Activated CD4-positive, alpha-beta T cell treated with anti-CD3 and anti-CD28 coated beads for 36 hours (primary cell): ENCODE measurements at regions of chr1 and their contacts with region 1.

Region 1: GRCh38 chr1:179025125-179025974 is at the start of gene FAM20B:
- DNase-seq: peak; percentile 93
- ATAC-seq: peak; percentile 85
- H3K4me3 Mint-ChIP-seq: peak within 1 kb of the TSS; percentile 87
- H3K27ac Mint-ChIP-seq: peak within 1 kb of the TSS; percentile 87
- H3K4me1 Mint-ChIP-seq: peaks cover 39% of the 10 kb centered on the region
- H3K27me3 Mint-ChIP-seq: no peaks in the 10 kb centered on the region
- total RNA-seq, gene FAM20B: 21.7 to 35.8 TPM

Region 2: DNA sequence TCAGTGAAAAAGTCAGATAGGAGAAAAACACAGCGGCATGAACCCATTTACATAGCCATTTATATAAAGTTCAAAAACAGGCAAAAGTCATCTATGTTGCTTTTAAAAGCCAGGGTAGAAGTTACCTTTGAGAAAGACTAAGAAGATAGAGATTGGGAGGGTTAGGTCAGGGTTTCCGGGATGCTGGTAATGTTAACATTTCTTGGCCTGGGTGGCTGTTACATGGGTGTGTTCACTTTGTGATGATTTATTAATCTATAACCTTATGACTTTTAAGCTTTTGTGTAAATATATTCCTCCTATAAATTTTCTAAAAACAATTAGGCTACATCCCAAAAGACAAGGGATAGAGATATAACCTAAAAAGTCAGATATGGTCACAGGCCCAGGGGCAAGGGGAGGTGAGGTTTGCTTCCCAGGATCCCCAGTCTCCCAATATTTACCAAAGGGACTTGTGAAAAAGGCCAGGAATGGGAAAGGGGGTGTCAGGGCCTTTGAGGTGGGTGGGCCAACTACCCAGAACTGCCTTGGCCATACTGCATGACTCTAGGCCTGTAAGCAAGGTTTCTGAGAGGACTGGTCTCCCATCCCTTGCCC is 14.6 kb before region 1 on chr1:
- CTCF ChIA-PET with region 1: no interaction called
- POLR2A ChIA-PET with region 1: no interaction called
- intact Hi-C with region 1: no loop called
- DNase-seq: no peak
- ATAC-seq: no peak
- H3K4me3 Mint-ChIP-seq: no peak overlapping the region
- H3K27ac Mint-ChIP-seq: no peak overlapping the region
- H3K4me1 Mint-ChIP-seq: no peaks in the 10 kb centered on the region
- H3K27me3 Mint-ChIP-seq: no peaks in the 10 kb centered on the region

Region 3: DNA sequence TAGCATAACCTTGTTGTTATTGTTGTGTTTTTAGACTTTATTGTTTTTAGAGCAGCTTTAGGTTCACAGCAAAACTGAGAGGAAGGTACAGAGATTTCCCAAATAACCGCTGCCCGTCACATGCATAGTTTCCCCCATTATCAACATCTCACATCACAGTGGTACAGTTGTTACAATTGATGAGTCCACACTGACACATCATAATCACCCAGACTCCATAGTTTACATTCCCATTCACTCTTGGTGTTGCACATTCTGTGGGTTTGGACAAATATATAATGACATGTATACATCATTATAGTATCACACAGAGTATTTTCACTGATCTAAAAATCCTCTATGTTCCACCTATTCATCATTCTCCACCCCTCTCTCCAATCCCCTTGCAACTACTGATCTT is 30.6 kb after region 1 on chr1:
- CTCF ChIA-PET with region 1: no interaction called
- POLR2A ChIA-PET with region 1: no interaction called
- intact Hi-C with region 1: no loop called
- DNase-seq: no peak
- ATAC-seq: no peak
- H3K4me3 Mint-ChIP-seq: no peak overlapping the region
- H3K27ac Mint-ChIP-seq: no peak overlapping the region
- H3K4me1 Mint-ChIP-seq: no peaks in the 10 kb centered on the region
- H3K27me3 Mint-ChIP-seq: no peaks in the 10 kb centered on the region

Region 4: DNA sequence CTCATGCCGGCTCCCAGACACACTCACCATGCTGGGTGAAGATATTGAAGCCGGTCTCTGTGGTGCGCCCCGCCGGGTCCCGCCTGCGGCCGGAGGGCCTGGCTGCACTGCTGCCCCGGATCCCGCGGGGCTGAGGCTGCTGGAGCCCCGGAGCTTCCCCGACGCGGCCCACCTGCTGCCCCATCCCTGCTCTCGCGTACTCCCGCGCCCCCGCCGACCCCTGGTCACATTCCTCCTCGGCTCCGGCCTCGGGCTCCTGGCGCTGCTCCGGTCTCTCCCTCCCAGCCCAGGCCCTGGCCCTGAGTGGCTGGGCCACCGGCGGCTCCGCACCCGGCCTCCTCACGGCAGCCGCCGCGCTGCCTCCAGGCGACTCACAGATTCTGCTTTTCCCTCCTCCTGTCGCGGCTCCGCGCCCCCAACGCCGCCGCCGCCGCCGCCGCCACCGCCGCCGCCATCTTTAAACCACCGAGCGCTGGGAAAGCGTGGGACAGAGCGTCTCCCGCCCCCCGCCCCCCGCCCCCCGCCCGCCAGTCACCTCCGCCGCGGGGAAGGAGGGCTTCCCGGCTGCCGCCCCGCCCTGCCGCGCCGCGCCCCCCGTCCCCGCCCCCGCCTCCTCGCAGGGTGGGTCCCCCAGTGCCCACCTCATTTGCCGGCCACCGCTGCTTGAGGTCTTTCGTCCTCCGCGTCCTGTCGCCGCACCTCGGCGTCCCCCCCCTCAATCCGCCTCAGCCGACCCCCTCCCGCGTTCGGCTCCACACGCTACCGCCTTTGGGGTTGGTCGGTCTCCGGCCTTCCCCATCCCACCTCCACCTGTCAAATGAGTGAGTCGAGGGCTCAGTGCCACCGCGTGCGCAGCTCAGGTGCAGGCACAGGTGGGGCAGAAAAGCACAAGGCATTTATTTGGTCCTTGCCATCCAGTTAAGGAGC is 204.1 kb after region 1 on chr1 and contains the start of gene ABL2:
- CTCF ChIA-PET with region 1: no interaction called
- POLR2A ChIA-PET with region 1: no interaction called
- intact Hi-C with region 1: loop called in 1 of 2 experiments (anchors 2 kb)
- DNase-seq: peak; percentile 71
- ATAC-seq: peak; percentile 21
- H3K4me3 Mint-ChIP-seq: peak within 1 kb of the TSS; percentile 86
- H3K27ac Mint-ChIP-seq: peak within 1 kb of the TSS; percentile 88
- H3K4me1 Mint-ChIP-seq: peaks cover 36% of the 10 kb centered on the region
- H3K27me3 Mint-ChIP-seq: no peaks in the 10 kb centered on the region
- total RNA-seq, gene ABL2: 6.6 to 8.4 TPM

Region 5: DNA sequence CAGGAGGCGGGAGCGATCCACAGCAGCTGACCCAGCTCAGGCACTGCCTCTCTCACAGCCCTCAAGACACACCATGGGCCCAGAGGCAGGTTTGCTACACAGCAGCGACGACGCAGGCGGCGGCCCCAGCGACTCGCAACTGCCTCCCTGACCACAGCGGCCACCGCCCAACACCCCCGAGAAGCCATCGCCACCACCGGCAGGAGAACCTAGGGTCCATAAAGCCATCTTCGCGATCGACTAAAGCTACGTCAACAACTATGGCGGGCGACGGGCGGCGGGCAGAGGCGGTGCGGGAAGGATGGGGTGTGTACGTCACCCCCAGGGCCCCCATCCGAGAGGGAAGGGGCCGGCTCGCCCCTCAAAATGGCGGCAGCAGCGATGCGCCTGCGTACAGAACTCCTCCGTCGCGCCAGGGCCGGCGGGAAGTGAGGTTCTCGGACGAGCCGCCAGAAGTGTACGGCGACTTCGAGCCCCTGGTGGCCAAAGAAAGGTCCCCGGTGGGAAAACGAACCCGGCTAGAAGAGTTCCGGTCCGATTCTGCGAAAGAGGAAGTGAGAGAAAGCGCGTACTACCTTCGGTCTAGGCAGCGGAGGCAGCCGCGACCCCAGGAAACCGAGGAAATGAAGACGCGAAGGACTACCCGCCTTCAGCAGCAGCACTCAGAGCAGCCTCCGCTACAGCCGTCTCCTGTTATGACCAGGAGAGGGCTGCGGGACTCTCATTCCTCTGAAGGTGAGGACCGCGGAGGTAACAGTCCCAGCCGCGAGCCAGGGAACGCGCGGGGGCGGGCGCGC is 857.1 kb after region 1 on chr1 and contains the start of gene TOR1AIP1:
- CTCF ChIA-PET with region 1: no interaction called
- POLR2A ChIA-PET with region 1: no interaction called
- intact Hi-C with region 1: loop called in 1 of 2 experiments (anchors 2 kb)
- DNase-seq: peak; percentile 98
- ATAC-seq: peak; percentile 80
- H3K4me3 Mint-ChIP-seq: peak within 1 kb of the TSS; percentile 87
- H3K27ac Mint-ChIP-seq: peak within 1 kb of the TSS; percentile 98
- H3K4me1 Mint-ChIP-seq: peaks cover 59% of the 10 kb centered on the region
- H3K27me3 Mint-ChIP-seq: no peaks in the 10 kb centered on the region
- total RNA-seq, gene TOR1AIP1: 50.1 to 71.6 TPM

Region 6: GRCh38 chr1:179954493-179955297 is 929.3 kb after region 1 on chr1 and contains the start of gene CEP350:
- CTCF ChIA-PET with region 1: no interaction called
- POLR2A ChIA-PET with region 1: no interaction called
- intact Hi-C with region 1: loop called in 1 of 2 experiments (anchors 10 kb)
- DNase-seq: peak; percentile 99
- ATAC-seq: peak; percentile 94
- H3K4me3 Mint-ChIP-seq: peak within 1 kb of the TSS; percentile 82
- H3K27ac Mint-ChIP-seq: peak within 1 kb of the TSS; percentile 98
- H3K4me1 Mint-ChIP-seq: peaks cover 47% of the 10 kb centered on the region
- H3K27me3 Mint-ChIP-seq: no peaks in the 10 kb centered on the region
- total RNA-seq, gene CEP350: 38.2 to 42.1 TPM

Region 7: DNA sequence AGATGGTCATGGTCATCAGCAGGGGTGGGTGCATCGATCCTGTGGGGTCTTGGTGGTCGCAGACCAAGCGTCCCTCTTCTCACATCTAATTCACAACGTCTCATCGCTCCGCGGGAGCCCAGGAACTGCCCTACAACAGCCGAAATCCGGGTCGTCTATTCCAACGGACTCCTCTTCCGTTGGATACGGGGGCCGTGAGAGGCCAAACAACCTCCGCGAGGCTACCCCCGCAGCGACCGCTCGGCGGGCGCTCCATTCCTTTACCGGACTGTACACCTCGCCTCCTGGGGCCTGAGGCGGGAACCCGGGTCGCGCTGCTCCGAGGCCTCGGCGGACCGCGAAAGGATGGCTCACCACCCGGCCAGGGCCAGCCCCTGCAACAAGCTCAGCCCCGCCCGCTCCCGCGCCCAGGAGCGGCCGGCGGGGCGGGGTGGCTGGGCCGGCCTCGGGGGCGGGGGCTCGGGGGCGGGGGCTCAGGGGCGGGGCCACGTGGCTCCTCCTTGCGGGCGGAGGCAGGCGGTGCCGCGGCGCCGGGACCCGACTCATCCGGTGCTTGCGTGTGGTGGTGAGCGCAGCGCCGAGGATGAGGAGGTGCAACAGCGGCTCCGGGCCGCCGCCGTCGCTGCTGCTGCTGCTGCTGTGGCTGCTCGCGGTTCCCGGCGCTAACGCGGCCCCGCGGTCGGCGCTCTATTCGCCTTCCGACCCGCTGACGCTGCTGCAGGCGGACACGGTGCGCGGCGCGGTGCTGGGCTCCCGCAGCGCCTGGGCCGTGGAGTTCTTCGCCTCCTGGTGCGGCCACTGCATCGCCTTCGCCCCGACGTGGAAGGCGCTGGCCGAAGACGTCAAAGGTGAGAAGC is 1129.2 kb after region 1 on chr1 and contains the start of gene QSOX1:
- CTCF ChIA-PET with region 1: no interaction called
- POLR2A ChIA-PET with region 1: no interaction called
- intact Hi-C with region 1: loop called in 1 of 2 experiments (anchors 10 kb)
- DNase-seq: peak; percentile 95
- ATAC-seq: peak; percentile 97
- H3K4me3 Mint-ChIP-seq: peak within 1 kb of the TSS; percentile 90
- H3K27ac Mint-ChIP-seq: peak within 1 kb of the TSS; percentile 85
- H3K4me1 Mint-ChIP-seq: peaks cover 25% of the 10 kb centered on the region
- H3K27me3 Mint-ChIP-seq: no peaks in the 10 kb centered on the region
- total RNA-seq, gene QSOX1: 18.3 to 31.6 TPM